Activated CD8-positive, alpha-beta T cell treated with anti-CD3 and anti-CD28 coated beads, Interleukin-2, amount 10 ng/mL, durations not matched to agents 7 days and 5 days (primary cell): ENCODE measurements at regions of chr6 and their contacts with region 1.

Region 1: GRCh38 chr6:46090115-46091079 is 39.4 kb upstream of the ENPP4 start:
- DNase-seq: peak; percentile 70
- ATAC-seq: no peak
- H3K4me3 Mint-ChIP-seq: no peak overlapping the region
- H3K27ac Mint-ChIP-seq: no peak overlapping the region
- H3K4me1 Mint-ChIP-seq: no peaks in the 10 kb centered on the region
- H3K27me3 Mint-ChIP-seq: peaks cover 21% of the 10 kb centered on the region

Region 2: DNA sequence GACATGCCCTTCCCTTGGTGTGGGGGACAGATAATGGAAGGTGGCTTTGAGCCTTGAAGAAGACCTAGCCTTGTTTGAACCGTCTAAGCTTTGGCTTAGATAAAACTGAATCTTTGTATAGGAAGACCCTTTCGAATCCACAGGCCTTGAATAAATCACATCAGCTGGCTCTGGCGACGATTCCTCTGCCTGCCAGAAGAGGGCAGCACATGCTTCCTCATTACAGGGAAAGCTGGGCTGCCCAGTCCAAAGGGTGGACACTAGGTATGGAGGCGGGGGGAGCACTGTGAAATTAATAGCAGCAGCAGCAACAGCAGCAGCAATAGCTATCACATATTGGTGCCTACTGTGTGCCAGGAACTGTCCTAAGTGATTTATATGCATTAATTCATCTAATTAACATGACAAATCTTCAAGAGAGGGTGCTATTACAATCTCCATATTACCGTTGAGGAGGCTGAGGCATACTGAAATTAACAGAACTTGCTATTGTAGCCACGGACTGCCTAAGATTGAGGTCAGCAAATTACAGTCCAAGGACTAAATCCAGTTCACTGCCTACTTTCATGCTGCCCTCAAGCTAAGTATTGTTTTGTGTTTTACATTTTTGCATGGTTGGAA is 159.9 kb before region 1 on chr6:
- CTCF ChIA-PET with region 1: interaction called, 20 read pairs
- POLR2A ChIA-PET with region 1: no interaction called
- DNase-seq: peak; percentile 63
- ATAC-seq: peak; percentile 42
- H3K4me3 Mint-ChIP-seq: no peak overlapping the region
- H3K27ac Mint-ChIP-seq: no peak overlapping the region
- H3K4me1 Mint-ChIP-seq: peaks cover 2% of the 10 kb centered on the region
- H3K27me3 Mint-ChIP-seq: no peaks in the 10 kb centered on the region

Region 3: DNA sequence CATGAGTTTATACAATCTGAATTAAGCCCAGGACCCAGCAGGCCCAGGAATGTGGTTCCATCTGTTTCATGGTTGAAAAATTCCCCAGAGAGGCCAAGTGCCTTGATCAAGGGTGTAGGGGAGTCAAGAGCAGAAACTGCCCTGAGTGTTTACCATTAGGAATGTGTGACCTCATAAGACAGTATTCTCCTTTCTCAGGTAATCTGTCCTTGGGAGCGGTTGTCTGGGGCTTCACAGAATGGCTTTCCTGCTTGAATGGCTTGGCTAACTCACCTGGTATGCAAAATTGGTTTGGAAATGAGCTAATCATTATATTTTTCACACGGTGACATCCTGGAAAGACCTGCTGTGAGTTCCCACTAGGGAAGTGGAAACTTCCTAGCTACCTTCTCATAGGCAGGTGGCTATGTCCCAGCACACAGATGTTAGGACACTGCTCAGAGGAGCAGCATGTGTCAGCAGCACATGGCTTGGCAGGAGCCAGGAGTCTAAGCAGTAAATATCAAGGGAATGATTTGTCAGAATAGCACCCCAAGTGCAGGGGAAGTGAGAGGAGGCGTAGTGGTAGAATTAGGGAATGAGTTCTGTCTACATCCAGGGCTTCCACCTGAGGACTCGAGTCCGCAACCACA is 92.4 kb before region 1 on chr6:
- CTCF ChIA-PET with region 1: no interaction called
- POLR2A ChIA-PET with region 1: no interaction called
- DNase-seq: no peak
- ATAC-seq: no peak
- H3K4me3 Mint-ChIP-seq: no peak overlapping the region
- H3K27ac Mint-ChIP-seq: no peak overlapping the region
- H3K4me1 Mint-ChIP-seq: no peaks in the 10 kb centered on the region
- H3K27me3 Mint-ChIP-seq: no peaks in the 10 kb centered on the region

Region 4: GRCh38 chr6:46080111-46080510 is 10.3 kb before region 1 on chr6:
- CTCF ChIA-PET with region 1: interaction called, 12 read pairs
- POLR2A ChIA-PET with region 1: no interaction called
- DNase-seq: no peak
- ATAC-seq: no peak
- H3K4me3 Mint-ChIP-seq: no peak overlapping the region
- H3K27ac Mint-ChIP-seq: no peak overlapping the region
- H3K4me1 Mint-ChIP-seq: no peaks in the 10 kb centered on the region
- H3K27me3 Mint-ChIP-seq: no peaks in the 10 kb centered on the region

Region 5: DNA sequence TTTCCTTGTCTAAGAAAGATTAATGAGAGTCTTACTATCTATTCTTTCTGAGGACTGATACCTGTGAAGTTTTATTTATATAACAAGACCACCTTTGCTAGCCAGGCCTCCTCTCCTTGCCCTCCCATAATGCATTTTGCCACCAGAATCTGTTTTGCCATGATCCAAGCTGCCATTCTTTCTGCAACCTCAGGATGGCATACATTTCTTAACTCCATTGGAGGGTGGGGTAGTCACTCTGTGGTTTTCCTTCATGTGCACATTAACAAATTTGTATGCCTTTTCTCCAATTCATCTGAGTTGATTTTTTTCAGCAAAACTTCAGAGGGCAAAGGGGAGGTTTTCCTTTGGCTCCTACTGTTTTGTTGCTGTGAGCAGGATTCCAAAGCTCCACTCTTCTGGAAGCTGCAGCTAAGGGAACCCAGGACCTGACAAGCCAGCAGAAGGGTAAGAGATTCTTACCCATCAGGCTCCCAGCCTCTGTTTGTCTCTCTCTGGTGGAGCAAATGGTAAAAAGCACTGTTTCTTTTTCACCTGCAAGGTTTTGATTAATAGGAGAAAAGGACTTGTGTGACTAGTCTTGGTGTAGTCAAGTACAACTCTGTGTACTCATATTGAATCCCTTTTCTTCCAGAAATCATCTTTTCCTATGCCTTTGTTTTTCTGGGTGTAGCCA is 13.2 kb after region 1 on chr6:
- CTCF ChIA-PET with region 1: interaction called, 11 read pairs
- POLR2A ChIA-PET with region 1: interaction called, 3 read pairs
- DNase-seq: no peak
- ATAC-seq: no peak
- H3K4me3 Mint-ChIP-seq: no peak overlapping the region
- H3K27ac Mint-ChIP-seq: no peak overlapping the region
- H3K4me1 Mint-ChIP-seq: no peaks in the 10 kb centered on the region
- H3K27me3 Mint-ChIP-seq: no peaks in the 10 kb centered on the region

Region 6: GRCh38 chr6:46129629-46130511 is 39.5 kb after region 1 on chr6 and contains the start of gene ENPP4:
- CTCF ChIA-PET with region 1: interaction called, 11 read pairs
- POLR2A ChIA-PET with region 1: no interaction called
- DNase-seq: peak; percentile 91
- ATAC-seq: peak; percentile 100
- H3K4me3 Mint-ChIP-seq: peak within 1 kb of the TSS; percentile 90
- H3K27ac Mint-ChIP-seq: peak within 1 kb of the TSS; percentile 79
- H3K4me1 Mint-ChIP-seq: peaks cover 34% of the 10 kb centered on the region
- H3K27me3 Mint-ChIP-seq: no peaks in the 10 kb centered on the region
- total RNA-seq, gene ENPP4: 4.9 to 5.4 TPM

Region 7: GRCh38 chr6:46221222-46221793 is 130.9 kb after region 1 on chr6:
- CTCF ChIA-PET with region 1: interaction called, 16 read pairs
- POLR2A ChIA-PET with region 1: no interaction called
- DNase-seq: no peak
- ATAC-seq: peak; percentile 42
- H3K4me3 Mint-ChIP-seq: no peak overlapping the region
- H3K27ac Mint-ChIP-seq: no peak overlapping the region
- H3K4me1 Mint-ChIP-seq: peaks cover 7% of the 10 kb centered on the region
- H3K27me3 Mint-ChIP-seq: peaks cover 5% of the 10 kb centered on the region

Region 8: DNA sequence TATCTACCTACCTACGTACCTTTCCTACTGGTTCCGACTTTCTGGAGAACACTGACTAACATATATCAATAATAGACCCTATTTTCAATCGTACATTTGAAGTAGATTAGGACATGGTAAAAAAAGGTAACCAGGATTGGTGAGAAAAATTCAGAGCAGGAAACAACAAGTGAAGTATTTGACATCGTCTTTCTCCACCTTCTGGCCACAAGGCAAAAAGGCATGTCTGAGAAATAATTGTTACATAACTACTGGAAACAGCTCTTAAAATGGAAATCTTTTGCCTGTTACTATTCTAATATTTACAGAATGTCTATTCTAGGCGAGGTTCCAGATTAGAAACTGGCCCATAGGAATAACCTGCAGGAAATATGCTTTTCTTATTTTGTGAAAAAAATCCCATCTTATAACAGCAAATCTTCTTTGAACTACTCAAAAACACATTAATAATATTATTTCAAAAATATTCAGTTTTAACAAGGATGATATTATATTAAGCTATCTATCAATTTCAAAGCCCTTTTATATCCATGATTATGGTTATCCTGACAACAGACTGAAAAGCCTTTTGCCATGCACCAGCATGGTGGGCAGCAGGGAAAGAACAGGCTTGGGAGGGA is 320.0 kb after region 1 on chr6:
- CTCF ChIA-PET with region 1: interaction called, 42 read pairs
- POLR2A ChIA-PET with region 1: no interaction called
- DNase-seq: peak; percentile 26
- ATAC-seq: no peak
- H3K4me3 Mint-ChIP-seq: no peak overlapping the region
- H3K27ac Mint-ChIP-seq: no peak overlapping the region
- H3K4me1 Mint-ChIP-seq: no peaks in the 10 kb centered on the region
- H3K27me3 Mint-ChIP-seq: peaks cover 11% of the 10 kb centered on the region